ENCODE measurements at regions of chr7 and their contacts with region 1.

Region 1: GRCh38 chr7:106461993-106462859 is 177.4 kb upstream of the NAMPT start:
- DNase-seq: peak; percentile 33 to 50
- H3K4me3 ChIP-seq: no peak overlapping the region
- H3K27ac ChIP-seq: peak overlapping the region; percentile 88
- H3K4me1 ChIP-seq: peaks cover 40% of the 10 kb centered on the region
- H3K27me3 ChIP-seq: no peaks in the 10 kb centered on the region
- CTCF ChIP-seq: peak; percentile 74

Region 2: DNA sequence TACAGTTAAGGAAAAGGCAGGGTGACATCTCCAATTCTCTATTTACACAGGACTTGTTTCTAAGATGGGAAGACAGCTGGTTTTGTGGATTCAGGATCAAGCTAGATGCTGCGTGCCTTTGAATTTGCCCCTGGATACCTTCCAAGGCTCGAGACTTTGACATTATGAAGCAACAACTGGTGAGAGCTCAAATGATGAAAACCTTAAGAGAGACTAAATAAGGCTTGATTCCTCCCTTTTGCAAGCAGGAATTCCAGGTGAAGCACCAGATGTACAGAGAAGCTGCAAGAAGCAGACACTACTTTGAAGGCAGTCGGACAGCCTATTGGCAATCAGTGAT is 666.9 kb before region 1 on chr7:
- CTCF ChIA-PET with region 1: no interaction called
- POLR2A ChIA-PET with region 1: no interaction called
- intact Hi-C with region 1: no loop called
- DNase-seq: no peak
- H3K4me3 ChIP-seq: no peak overlapping the region
- H3K27ac ChIP-seq: peak overlapping the region; percentile 48; the same call in 1 of the 2 replicates
- H3K4me1 ChIP-seq: peaks cover 47% of the 10 kb centered on the region
- H3K27me3 ChIP-seq: no peaks in the 10 kb centered on the region
- CTCF ChIP-seq: no peak

Region 3: DNA sequence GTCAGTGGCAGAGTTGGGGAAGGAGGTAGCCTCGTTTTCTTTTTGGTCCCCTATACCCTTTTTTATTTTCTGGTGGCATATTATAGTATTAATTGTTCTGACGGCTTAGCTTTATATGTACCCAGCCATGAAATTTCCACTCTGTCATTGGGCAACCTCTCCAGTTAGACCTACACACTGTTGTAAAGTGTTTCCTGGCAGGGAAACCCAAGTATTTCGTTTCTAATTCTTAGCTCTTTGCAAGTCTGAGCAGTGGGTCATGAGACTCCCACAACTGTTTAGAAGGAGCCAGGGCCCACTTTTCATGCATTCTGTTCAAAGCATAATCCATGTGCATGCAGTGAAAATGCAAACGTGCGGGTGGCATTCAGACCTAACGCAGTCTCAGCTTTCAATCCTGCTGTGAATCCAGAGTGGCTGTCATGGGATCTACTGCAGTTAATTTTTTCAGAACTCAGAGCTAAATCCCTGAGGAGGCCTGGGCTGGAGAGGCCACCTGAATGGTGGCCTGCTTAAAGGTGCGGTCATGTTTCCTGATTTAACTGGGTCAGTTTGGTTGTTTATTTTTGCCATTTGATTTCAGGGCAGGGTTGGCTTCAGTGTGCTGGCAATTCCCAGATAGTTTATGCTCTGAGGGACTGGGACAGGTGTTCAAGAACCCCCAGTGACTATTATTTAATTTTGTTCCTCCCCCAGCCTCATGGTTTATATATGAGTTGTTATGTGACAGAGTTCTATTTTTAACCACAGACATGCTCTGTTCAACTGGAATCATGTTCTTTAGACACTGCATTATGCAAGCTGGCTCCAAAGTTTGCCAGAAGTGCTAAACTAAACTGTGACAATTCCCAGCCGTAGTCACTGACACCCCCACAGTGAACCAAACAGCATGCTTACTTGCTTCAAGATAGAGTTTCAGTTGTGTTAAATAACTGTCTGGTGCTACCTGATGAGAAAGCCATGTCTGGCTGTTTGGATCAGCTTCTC is 322.7 kb before region 1 on chr7:
- CTCF ChIA-PET with region 1: no interaction called
- POLR2A ChIA-PET with region 1: no interaction called
- intact Hi-C with region 1: no loop called
- DNase-seq: no peak
- H3K4me3 ChIP-seq: no peak overlapping the region
- H3K27ac ChIP-seq: no peak overlapping the region
- H3K4me1 ChIP-seq: no peaks in the 10 kb centered on the region
- H3K27me3 ChIP-seq: no peaks in the 10 kb centered on the region
- CTCF ChIP-seq: no peak

Region 4: GRCh38 chr7:106270122-106270977 is 191.9 kb before region 1 on chr7:
- CTCF ChIA-PET with region 1: interaction called, 16 read pairs
- POLR2A ChIA-PET with region 1: no interaction called
- intact Hi-C with region 1: no loop called
- DNase-seq: no peak
- H3K4me3 ChIP-seq: no peak overlapping the region
- H3K27ac ChIP-seq: peak overlapping the region; percentile 36
- H3K4me1 ChIP-seq: peaks cover 3% of the 10 kb centered on the region; the same call in 1 of the 2 replicates
- H3K27me3 ChIP-seq: no peaks in the 10 kb centered on the region
- CTCF ChIP-seq: no peak

Region 5: GRCh38 chr7:106339513-106340246 is 122.5 kb before region 1 on chr7:
- CTCF ChIA-PET with region 1: no interaction called
- POLR2A ChIA-PET with region 1: no interaction called
- intact Hi-C with region 1: no loop called
- DNase-seq: no peak
- H3K4me3 ChIP-seq: no peak overlapping the region
- H3K27ac ChIP-seq: no peak overlapping the region
- H3K4me1 ChIP-seq: peaks cover 6% of the 10 kb centered on the region
- H3K27me3 ChIP-seq: no peaks in the 10 kb centered on the region
- CTCF ChIP-seq: no peak

Region 6: GRCh38 chr7:106367018-106367420 is 95.2 kb before region 1 on chr7:
- CTCF ChIA-PET with region 1: no interaction called
- POLR2A ChIA-PET with region 1: interaction called, 4 read pairs
- intact Hi-C with region 1: loop called (anchors 1 kb)
- DNase-seq: no peak
- H3K4me3 ChIP-seq: no peak overlapping the region
- H3K27ac ChIP-seq: peak overlapping the region; percentile 99
- H3K4me1 ChIP-seq: peaks cover 54% of the 10 kb centered on the region
- H3K27me3 ChIP-seq: no peaks in the 10 kb centered on the region
- CTCF ChIP-seq: 0 out of 2 replicates have a peak, but pooled peaks have one; percentile 21

Region 7: GRCh38 chr7:106418094-106418493 is 44.1 kb before region 1 on chr7:
- CTCF ChIA-PET with region 1: interaction called, 4 read pairs
- POLR2A ChIA-PET with region 1: interaction called, 4 read pairs
- intact Hi-C with region 1: loop called (anchors 2 kb)
- DNase-seq: peak; percentile 17 to 92
- H3K4me3 ChIP-seq: peak overlapping the region; percentile 24; the same call in 1 of the 2 replicates
- H3K27ac ChIP-seq: peak overlapping the region; percentile 98
- H3K4me1 ChIP-seq: peaks cover 48% of the 10 kb centered on the region
- H3K27me3 ChIP-seq: no peaks in the 10 kb centered on the region
- CTCF ChIP-seq: no peak

Region 8: DNA sequence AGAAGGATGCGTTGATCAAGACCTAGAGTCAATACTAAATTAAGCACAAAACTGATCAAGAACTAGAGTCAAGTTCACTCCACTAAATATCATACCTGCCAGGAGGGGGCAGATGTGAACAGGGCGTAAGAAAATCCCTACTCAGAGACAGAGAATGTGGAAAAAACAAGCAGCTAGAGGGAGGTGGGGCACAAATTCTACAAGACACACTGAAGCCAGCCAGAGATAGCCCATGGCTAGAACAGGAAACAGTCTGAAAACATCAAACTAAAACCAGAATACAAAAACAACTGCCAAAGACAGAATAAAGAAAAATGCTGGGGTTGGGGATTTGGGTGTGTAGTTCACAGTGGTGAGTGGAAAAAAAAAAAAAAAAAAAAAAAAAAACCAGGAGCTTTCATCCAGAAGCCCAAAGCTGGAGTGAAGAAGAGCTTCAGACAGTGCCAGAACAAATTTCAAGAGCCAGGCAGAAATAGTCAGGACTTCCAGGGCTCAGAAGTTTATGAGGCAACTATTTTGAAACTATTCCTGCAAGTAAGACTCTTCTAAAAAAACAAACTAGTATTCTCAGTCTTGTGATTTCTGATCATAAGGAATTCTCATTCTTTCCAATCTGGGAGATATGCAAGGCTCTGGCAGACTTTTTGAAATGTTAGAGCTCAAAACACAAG is 80.5 kb after region 1 on chr7:
- CTCF ChIA-PET with region 1: interaction called, 4 read pairs
- POLR2A ChIA-PET with region 1: interaction called, 3 read pairs
- intact Hi-C with region 1: loop called (anchors 1 kb)
- DNase-seq: peak; percentile 61 to 70
- H3K4me3 ChIP-seq: no peak overlapping the region
- H3K27ac ChIP-seq: no peak overlapping the region
- H3K4me1 ChIP-seq: peaks cover 8% of the 10 kb centered on the region; the same call in 1 of the 2 replicates
- H3K27me3 ChIP-seq: no peaks in the 10 kb centered on the region
- CTCF ChIP-seq: peak; percentile 82

Region 9: DNA sequence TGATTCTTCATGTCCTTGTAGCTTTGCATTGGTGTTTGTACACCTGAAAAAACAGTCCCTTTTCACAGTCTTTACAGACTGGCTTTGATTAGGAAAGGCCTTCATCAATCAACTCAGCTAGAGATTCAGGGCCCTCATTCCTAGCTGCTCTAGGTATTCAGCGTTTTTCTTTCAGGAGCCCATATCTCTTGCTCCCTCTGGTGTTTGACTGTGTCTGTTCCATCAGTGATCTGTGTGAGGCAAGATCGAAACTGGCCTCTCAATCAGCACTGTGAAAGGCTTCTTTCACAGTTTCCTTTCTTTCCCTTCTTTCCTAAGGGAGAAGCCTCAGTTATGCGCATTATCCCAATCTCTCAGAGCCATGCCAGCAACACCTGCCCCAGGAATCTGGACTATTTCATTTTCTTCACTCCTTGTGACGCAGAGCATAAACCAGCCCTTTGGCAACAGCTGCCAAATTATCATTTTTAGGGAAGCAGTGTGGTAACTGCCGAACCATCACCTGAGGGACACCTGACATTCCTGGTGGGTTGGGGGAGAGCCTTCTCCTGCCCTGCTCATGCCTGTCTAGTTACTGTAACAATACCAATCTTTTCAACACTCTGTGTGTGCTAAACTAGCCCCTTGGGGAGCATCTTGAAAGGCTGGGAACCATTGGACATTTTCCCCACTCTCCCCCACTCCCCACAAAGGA is 274.4 kb after region 1 on chr7:
- CTCF ChIA-PET with region 1: interaction called, 4 read pairs
- POLR2A ChIA-PET with region 1: interaction called, 8 read pairs
- intact Hi-C with region 1: loop called (anchors 10 kb)
- DNase-seq: peak; percentile 33 to 58
- H3K4me3 ChIP-seq: no peak overlapping the region
- H3K27ac ChIP-seq: peak overlapping the region; percentile 2
- H3K4me1 ChIP-seq: no peaks in the 10 kb centered on the region
- H3K27me3 ChIP-seq: no peaks in the 10 kb centered on the region
- CTCF ChIP-seq: peak; percentile 66